CD8-positive, alpha-beta T cell (primary cell): ENCODE measurements at regions of chr9 and their contacts with region 1.

Region 1: DNA sequence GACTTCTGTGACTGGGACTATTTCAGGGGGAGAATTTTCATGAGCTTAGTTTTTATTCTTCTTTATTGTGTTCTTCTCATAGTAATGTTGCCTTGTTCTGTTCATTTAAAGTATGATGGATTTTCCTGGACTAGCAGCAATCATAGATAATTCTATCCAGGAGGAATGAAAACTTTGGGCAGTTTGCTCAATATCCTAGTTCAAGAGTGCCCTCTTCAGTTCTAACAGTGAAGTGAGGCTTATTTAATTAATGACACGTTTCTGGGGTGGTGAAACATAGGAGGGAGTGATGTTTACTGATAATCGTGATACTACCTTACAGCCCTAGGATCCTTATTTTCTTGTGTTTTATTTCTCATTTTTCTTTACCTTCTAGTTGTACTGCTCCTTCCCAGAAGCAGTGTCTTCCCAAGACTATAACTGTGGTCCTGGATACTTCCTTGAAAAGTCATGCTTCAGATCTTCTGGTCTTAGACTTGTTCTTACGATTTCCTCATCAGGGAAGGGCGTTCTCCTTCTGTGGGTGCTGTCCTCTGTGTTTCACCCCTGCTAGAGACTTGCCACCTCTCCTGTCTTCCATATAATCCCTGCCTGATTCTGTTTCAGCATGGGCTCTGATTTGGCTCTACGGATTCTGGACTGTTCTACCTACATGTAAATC is 57.4 kb downstream of the CFAP95 start:
- DNase-seq: peak in 2 of 9 experiments; percentile 15 to 46
- ATAC-seq: no peak
- H3K4me3 ChIP-seq: no peak overlapping the region
- H3K4me3 Mint-ChIP-seq: no peak overlapping the region
- H3K27ac ChIP-seq: no peak overlapping the region
- H3K27ac Mint-ChIP-seq: no peak overlapping the region
- H3K4me1 ChIP-seq: no peaks in the 10 kb centered on the region
- H3K4me1 Mint-ChIP-seq: no peaks in the 10 kb centered on the region
- H3K27me3 ChIP-seq: no peaks in the 10 kb centered on the region
- H3K27me3 Mint-ChIP-seq: no peaks in the 10 kb centered on the region
- CTCF ChIP-seq: peak; percentile 60

Region 2: GRCh38 chr9:69056191-69056815 is 821.7 kb before region 1 on chr9:
- CTCF ChIA-PET with region 1: no interaction called
- POLR2A ChIA-PET with region 1: no interaction called
- intact Hi-C with region 1: loop called in 1 of 2 experiments (anchors 5 kb)
- DNase-seq: no peak
- ATAC-seq: no peak
- H3K4me3 ChIP-seq: no peak overlapping the region
- H3K4me3 Mint-ChIP-seq: no peak overlapping the region
- H3K27ac ChIP-seq: no peak overlapping the region
- H3K27ac Mint-ChIP-seq: no peak overlapping the region
- H3K4me1 ChIP-seq: no peaks in the 10 kb centered on the region
- H3K4me1 Mint-ChIP-seq: peaks cover 12% of the 10 kb centered on the region
- H3K27me3 ChIP-seq: no peaks in the 10 kb centered on the region
- H3K27me3 Mint-ChIP-seq: no peaks in the 10 kb centered on the region
- CTCF ChIP-seq: no peak

Region 3: DNA sequence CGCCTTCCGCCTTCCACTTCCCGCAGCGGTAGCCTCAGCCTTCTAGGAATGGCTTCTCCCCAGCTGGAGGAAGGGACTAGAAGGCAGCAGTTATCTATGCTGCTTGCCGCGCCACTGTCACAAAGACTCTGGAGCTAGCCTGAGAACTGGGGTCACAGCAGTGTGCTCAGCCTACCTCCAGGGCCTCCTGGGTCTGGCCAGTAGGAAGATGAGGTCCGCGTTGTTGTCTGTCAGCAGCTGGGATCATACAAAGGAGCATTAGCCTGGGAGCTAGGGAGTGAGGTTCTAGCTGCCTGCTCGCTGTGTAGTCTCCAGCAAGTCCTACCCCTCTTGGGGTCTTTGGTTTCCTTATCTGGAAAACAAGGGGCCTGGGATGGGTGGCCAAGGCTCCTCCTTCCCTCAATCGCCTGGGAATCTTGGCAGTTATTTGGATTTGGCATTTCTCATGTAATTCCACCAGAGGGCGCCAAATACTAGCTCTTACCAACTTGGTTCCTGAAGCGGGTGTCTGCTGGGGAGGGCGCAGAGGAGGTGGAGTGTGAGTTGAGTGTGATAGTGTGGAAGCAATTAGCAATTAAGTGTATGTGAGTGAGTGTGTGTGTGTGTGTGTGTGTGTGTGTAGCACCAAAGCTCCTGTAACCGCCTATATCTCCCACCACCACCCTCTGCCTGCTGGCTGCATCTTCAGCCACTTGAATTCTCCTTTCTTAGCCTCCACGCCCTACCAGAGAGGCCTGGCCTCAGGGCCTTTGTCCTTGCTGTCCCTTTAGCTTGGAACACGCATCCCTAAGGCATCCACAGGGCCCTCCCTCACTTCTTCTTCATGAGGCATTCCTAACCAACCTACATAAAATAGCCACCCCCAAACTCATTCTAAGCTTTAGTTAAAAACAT is 455.8 kb before region 1 on chr9:
- CTCF ChIA-PET with region 1: interaction called, 7 read pairs
- POLR2A ChIA-PET with region 1: no interaction called
- intact Hi-C with region 1: loop called (anchors 1 to 2 kb)
- DNase-seq: peak in 8 of 9 experiments; percentile 6 to 62 (median 40)
- ATAC-seq: no peak
- H3K4me3 ChIP-seq: no peak overlapping the region
- H3K4me3 Mint-ChIP-seq: no peak overlapping the region
- H3K27ac ChIP-seq: no peak overlapping the region
- H3K27ac Mint-ChIP-seq: no peak overlapping the region
- H3K4me1 ChIP-seq: no peaks in the 10 kb centered on the region
- H3K4me1 Mint-ChIP-seq: no peaks in the 10 kb centered on the region
- H3K27me3 ChIP-seq: no peaks in the 10 kb centered on the region
- H3K27me3 Mint-ChIP-seq: peaks cover 18% of the 10 kb centered on the region
- CTCF ChIP-seq: peak; percentile 63

Region 4: DNA sequence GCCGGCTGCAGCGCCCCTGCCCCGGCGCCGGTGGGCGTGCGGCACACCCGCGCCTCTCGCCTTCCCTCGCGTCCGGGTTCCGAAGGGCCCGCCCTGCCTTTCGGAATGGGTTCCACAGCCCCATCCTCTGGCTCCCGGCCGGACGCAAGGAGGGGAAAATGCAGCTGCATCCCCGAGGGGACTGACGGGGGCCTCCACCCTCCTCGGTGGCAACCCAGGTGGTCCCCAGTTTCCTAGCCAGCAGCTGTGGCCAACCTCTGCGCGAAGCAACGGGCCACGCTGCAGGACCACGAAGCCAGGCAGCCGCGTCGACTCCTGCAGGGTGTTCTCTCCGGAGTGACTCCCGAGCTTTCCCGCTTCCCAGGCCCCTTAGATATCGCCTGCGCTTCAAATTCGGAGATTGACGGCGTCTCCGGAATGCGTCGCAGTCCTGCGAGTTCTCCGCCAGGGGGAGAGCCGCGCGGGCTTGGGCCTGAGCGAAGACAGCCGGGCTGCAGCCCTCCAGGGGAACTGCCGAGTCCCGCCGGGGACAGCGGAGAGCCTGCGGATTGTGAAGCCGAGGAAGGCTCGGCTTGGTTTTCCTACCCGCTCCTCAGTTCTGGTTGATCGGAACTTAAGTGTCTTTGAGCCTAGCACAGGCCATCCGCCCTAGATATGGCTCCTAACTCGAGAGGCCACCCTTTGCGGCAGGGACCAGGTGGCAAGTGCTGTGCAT is 205.2 kb before region 1 on chr9:
- CTCF ChIA-PET with region 1: interaction called, 9 read pairs
- POLR2A ChIA-PET with region 1: no interaction called
- intact Hi-C with region 1: loop called (anchors 2 kb)
- DNase-seq: peak; percentile 27 to 76 (median 69)
- ATAC-seq: peak; percentile 81
- H3K4me3 ChIP-seq: peak overlapping the region; percentile 58 to 73
- H3K4me3 Mint-ChIP-seq: peak overlapping the region; percentile 81
- H3K27ac ChIP-seq: no peak overlapping the region
- H3K27ac Mint-ChIP-seq: no peak overlapping the region
- H3K4me1 ChIP-seq: peaks cover 5% of the 10 kb centered on the region
- H3K4me1 Mint-ChIP-seq: peaks cover 18% of the 10 kb centered on the region
- H3K27me3 ChIP-seq: peaks cover 0 to 3% of the 10 kb centered on the region in 2 experiments
- H3K27me3 Mint-ChIP-seq: peaks cover 19% of the 10 kb centered on the region
- CTCF ChIP-seq: peak; percentile 76

Region 5: DNA sequence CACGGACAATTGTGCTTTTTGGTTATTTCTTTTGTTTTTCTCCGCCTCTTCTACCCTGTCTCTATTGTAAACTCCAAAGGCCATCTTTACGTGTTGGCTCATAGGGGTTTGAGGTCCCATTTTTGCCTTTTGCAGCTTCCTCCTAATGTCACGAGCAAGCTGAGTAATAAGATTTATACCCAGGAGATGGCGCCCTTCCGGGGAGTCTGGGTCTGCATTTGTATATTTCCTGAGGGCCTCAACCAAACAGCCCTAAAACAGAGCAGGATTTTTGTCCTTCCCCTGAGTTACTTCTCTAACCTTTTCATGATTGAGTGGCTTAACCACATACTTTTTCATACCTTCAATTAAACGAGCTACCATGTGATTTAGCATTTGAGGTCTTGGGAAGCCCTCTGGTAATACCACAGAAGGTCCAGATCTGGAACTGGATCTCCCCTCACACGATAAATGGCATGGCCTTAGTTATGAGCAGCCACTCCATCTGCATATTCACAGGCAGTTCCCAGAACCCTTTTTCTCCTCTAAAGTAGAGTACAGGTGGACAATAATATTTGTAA is 68.6 kb before region 1 on chr9:
- CTCF ChIA-PET with region 1: interaction called, 3 read pairs
- POLR2A ChIA-PET with region 1: no interaction called
- intact Hi-C with region 1: loop called (anchors 1 kb)
- DNase-seq: peak in 7 of 9 experiments; percentile 16 to 59 (median 25)
- ATAC-seq: peak; percentile 52
- H3K4me3 ChIP-seq: no peak overlapping the region
- H3K4me3 Mint-ChIP-seq: no peak overlapping the region
- H3K27ac ChIP-seq: no peak overlapping the region
- H3K27ac Mint-ChIP-seq: no peak overlapping the region
- H3K4me1 ChIP-seq: no peaks in the 10 kb centered on the region
- H3K4me1 Mint-ChIP-seq: no peaks in the 10 kb centered on the region
- H3K27me3 ChIP-seq: no peaks in the 10 kb centered on the region
- H3K27me3 Mint-ChIP-seq: peaks cover 3% of the 10 kb centered on the region
- CTCF ChIP-seq: peak; percentile 34